WTC11 (cell line): ENCODE measurements at regions of chr15 and their contacts with region 1.

Region 1: GRCh38 chr15:32651229-32651837 is 9.8 kb downstream of the SCG5 start:
- DNase-seq: peak; percentile 70
- ATAC-seq: peak; percentile 89
- H3K4me3 Mint-ChIP-seq: no peak overlapping the region
- H3K27ac Mint-ChIP-seq: no peak overlapping the region
- H3K4me1 Mint-ChIP-seq: peaks cover 29% of the 10 kb centered on the region
- H3K27me3 Mint-ChIP-seq: no peaks in the 10 kb centered on the region
- CTCF ChIP-seq: peak; percentile 87

Region 2: DNA sequence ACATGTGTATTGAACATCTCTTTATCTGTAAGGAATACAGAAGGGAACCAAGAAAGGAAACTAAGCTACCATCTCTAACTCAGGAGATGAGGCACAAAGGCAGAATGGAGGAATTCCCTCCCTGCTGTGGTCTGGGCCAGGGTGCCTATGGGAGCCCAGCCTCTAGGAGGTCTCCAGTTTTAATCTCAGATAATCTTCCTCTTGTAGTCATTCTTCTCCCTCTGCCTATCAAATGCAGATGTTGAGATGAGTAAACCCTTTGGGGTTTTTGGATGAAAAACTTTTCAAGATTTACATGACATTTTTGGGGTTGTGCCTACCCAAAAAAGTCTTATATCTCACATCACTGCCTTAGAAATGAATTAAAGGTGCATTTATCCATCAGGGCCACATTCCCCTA is 13.5 kb after region 1 on chr15:
- CTCF ChIA-PET with region 1: interaction called, 17 read pairs
- POLR2A ChIA-PET with region 1: no interaction called
- DNase-seq: no peak
- ATAC-seq: no peak
- H3K4me3 Mint-ChIP-seq: no peak overlapping the region
- H3K27ac Mint-ChIP-seq: no peak overlapping the region
- H3K4me1 Mint-ChIP-seq: peaks cover 17% of the 10 kb centered on the region
- H3K27me3 Mint-ChIP-seq: no peaks in the 10 kb centered on the region
- CTCF ChIP-seq: no peak

Region 3: DNA sequence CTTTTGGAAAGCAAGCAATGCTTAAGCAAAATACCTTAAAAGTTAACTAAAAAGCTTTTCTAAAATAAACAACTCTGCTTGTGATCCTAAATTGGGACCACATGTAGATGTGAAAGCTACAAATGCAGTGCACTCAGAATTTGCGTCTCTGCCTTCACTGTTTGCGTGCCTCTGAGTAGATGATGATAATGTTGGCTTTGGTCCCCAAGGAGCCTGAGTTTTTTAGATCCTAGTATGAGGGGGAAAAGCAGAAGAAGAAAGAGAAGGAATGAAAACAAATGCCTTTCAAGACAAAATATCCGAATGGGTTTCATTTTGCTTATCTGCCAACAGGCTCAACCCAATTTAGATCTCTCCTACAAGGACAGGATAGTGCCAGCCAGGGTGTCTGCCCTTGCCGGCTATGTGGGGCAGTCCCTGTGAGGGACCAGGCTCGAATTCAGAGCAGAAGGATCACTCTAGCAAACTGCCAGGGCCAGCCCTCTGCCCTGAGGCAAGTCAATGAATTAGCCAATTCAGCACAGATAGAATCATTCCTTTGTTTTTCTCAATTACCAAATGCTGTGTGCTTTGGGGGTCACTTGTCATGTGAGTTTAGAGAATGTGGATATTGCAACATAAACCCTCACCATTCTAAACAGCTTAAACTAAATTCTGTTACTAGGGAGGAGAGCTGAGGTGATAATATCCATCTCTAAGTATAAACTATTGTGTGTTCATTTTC is 18.7 kb after region 1 on chr15:
- CTCF ChIA-PET with region 1: interaction called, 16 read pairs
- POLR2A ChIA-PET with region 1: no interaction called
- DNase-seq: no peak
- ATAC-seq: peak; percentile 83
- H3K4me3 Mint-ChIP-seq: no peak overlapping the region
- H3K27ac Mint-ChIP-seq: peak overlapping the region; percentile 72
- H3K4me1 Mint-ChIP-seq: peaks cover 33% of the 10 kb centered on the region
- H3K27me3 Mint-ChIP-seq: no peaks in the 10 kb centered on the region
- CTCF ChIP-seq: no peak

Region 4: DNA sequence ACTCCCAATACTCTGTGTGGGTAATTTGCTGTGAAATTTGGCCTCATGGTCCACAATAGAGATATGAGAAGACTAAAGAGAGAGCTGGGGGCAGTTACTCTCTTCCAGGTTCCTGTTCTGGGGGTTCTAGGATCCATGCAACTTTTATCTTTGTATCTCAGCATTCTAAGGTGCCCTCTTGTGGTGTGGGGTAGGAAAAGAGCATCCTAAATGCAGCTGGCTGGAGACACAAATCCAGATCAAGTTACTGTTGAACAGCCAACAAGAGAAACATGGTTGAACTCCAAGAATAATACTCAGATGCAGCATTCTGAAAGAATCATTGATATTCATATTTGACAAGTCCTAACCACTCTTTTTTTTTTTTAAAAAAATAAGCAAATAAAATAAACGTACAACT is 304.7 kb after region 1 on chr15:
- CTCF ChIA-PET with region 1: interaction called, 10 read pairs
- POLR2A ChIA-PET with region 1: no interaction called
- DNase-seq: no peak
- ATAC-seq: peak; percentile 58
- H3K4me3 Mint-ChIP-seq: no peak overlapping the region
- H3K27ac Mint-ChIP-seq: no peak overlapping the region
- H3K4me1 Mint-ChIP-seq: peaks cover 39% of the 10 kb centered on the region
- H3K27me3 Mint-ChIP-seq: no peaks in the 10 kb centered on the region; the same call in 1 of the 2 replicates
- CTCF ChIP-seq: 0 out of 2 replicates have a peak, but pooled peaks have one; percentile 17